Activated CD8-positive, alpha-beta T cell treated with anti-CD3 and anti-CD28 coated beads for 36 hours (primary cell): ENCODE measurements at regions of chr14 and their contacts with region 1.

Region 1: GRCh38 chr14:23631702-23632460 is 4.3 kb upstream of the DHRS2 start:
- DNase-seq: peak; percentile 73
- ATAC-seq: peak; percentile 89
- H3K4me3 Mint-ChIP-seq: peak overlapping the region; percentile 42
- H3K27ac Mint-ChIP-seq: no peak overlapping the region
- H3K4me1 Mint-ChIP-seq: peaks cover 4% of the 10 kb centered on the region
- H3K27me3 Mint-ChIP-seq: no peaks in the 10 kb centered on the region
- CTCF ChIP-seq: peak; percentile 97

Region 2: GRCh38 chr14:23567192-23568020 is 64.5 kb before region 1 on chr14 and contains the start of gene AP1G2:
- CTCF ChIA-PET with region 1: interaction called, 10 read pairs
- POLR2A ChIA-PET with region 1: no interaction called
- intact Hi-C with region 1: no loop called
- DNase-seq: peak; percentile 94
- ATAC-seq: peak; percentile 97
- H3K4me3 Mint-ChIP-seq: peak within 1 kb of the TSS; percentile 94
- H3K27ac Mint-ChIP-seq: peak within 1 kb of the TSS; percentile 99
- H3K4me1 Mint-ChIP-seq: peaks cover 23% of the 10 kb centered on the region
- H3K27me3 Mint-ChIP-seq: peaks cover 3% of the 10 kb centered on the region
- CTCF ChIP-seq: no peak
- total RNA-seq, gene AP1G2: 146 to 155 TPM

Region 3: DNA sequence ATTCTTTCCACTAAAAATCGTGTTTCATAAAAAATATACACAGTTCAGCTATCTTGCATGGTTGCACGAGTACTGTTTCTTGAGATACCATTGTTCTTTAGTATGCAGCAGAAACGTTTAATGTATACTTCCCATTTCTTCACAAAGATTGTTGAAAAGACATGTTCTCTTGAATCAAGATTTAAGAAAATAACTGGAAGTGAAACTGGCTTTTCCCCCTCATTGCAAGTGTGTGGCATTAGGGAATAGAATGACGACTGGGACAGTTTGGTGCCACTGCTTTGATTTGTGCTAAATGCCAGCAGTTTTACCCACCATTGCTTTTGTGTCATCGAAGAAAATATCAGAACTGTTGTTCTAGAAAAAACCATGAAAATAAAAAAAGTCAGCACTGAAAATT is 16.0 kb before region 1 on chr14:
- CTCF ChIA-PET with region 1: interaction called, 73 read pairs
- POLR2A ChIA-PET with region 1: no interaction called
- intact Hi-C with region 1: no loop called
- DNase-seq: no peak
- ATAC-seq: no peak
- H3K4me3 Mint-ChIP-seq: no peak overlapping the region
- H3K27ac Mint-ChIP-seq: no peak overlapping the region
- H3K4me1 Mint-ChIP-seq: peaks cover 20% of the 10 kb centered on the region
- H3K27me3 Mint-ChIP-seq: peaks cover 4% of the 10 kb centered on the region
- CTCF ChIP-seq: no peak

Region 4: GRCh38 chr14:23653066-23653465 is 21.2 kb after region 1 on chr14:
- CTCF ChIA-PET with region 1: interaction called, 54 read pairs
- POLR2A ChIA-PET with region 1: no interaction called
- intact Hi-C with region 1: no loop called
- DNase-seq: no peak
- ATAC-seq: no peak
- H3K4me3 Mint-ChIP-seq: no peak overlapping the region
- H3K27ac Mint-ChIP-seq: no peak overlapping the region
- H3K4me1 Mint-ChIP-seq: no peaks in the 10 kb centered on the region
- H3K27me3 Mint-ChIP-seq: no peaks in the 10 kb centered on the region
- CTCF ChIP-seq: no peak

Region 5: GRCh38 chr14:23681337-23681736 is 49.5 kb after region 1 on chr14:
- CTCF ChIA-PET with region 1: interaction called, 21 read pairs
- POLR2A ChIA-PET with region 1: no interaction called
- intact Hi-C with region 1: no loop called
- DNase-seq: no peak
- ATAC-seq: no peak
- H3K4me3 Mint-ChIP-seq: no peak overlapping the region
- H3K27ac Mint-ChIP-seq: no peak overlapping the region
- H3K4me1 Mint-ChIP-seq: no peaks in the 10 kb centered on the region
- H3K27me3 Mint-ChIP-seq: peaks cover 12% of the 10 kb centered on the region
- CTCF ChIP-seq: no peak

Region 6: DNA sequence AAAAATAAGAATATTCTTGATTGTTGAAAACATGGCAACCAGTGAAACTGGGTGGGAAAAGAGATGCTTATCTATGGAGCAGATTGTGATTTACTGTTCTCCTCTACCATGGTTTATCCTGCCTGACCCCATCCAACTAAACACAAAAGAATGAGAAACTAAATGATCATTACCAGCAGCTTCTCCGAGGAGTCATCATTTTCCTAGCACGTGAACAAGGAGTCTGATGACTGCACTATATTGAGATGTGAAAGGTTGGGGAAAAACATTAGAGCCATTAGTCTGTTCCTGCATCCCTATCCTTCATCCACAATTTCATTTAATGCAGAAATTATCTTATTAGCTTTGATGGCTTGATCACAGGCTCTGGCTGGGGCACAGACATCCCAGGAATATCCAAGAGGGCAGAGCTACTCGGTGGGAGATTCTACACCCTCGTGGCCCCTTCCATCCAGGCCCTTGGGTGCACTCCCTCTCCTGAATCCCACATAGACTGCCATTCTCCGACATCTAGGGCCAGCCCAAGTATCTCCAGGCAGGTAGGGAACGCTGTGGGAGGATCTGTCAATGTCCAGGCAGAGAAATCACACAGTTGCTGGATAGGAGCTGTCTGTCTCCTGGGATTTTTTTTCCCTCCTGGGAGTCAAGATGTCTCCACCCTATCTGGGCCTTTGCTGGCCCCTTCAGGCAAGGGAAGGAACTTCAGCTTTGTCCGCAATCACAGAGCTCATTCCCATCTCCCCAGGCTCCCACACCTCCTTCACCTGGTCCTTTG is 278.4 kb after region 1 on chr14:
- CTCF ChIA-PET with region 1: interaction called, 39 read pairs
- POLR2A ChIA-PET with region 1: no interaction called
- intact Hi-C with region 1: loop called (anchors 10 kb)
- DNase-seq: peak; percentile 35
- ATAC-seq: no peak
- H3K4me3 Mint-ChIP-seq: no peak overlapping the region
- H3K27ac Mint-ChIP-seq: no peak overlapping the region
- H3K4me1 Mint-ChIP-seq: no peaks in the 10 kb centered on the region
- H3K27me3 Mint-ChIP-seq: peaks cover 10% of the 10 kb centered on the region
- CTCF ChIP-seq: peak; percentile 78